ENCODE measurements at regions of chr10 and their contacts with region 1.

Region 1: GRCh38 chr10:90999512-91000172 is 78.8 kb upstream of the ANKRD1 start:
- DNase-seq: peak; percentile 54
- ATAC-seq: peak; percentile 69
- H3K4me3 ChIP-seq: no peak overlapping the region
- H3K27ac ChIP-seq: peak overlapping the region; percentile 87
- H3K4me1 ChIP-seq: peaks cover 33% of the 10 kb centered on the region
- H3K27me3 ChIP-seq: no peaks in the 10 kb centered on the region
- CTCF ChIP-seq: no peak
- EP300 ChIP-seq: peak; percentile 31 to 80; a peak in 2 of 4 replicates
- POLR2A ChIP-seq: no peak
- RAD21 ChIP-seq: no peak

Region 2: GRCh38 chr10:91017198-91017597 is 17.6 kb after region 1 on chr10:
- CTCF ChIA-PET with region 1: interaction called, 41 read pairs
- POLR2A ChIA-PET with region 1: no interaction called
- RAD21 ChIA-PET with region 1: interaction called, 3 read pairs
- SMC1A ChIA-PET with region 1: interaction called, 15 read pairs
- in situ Hi-C with region 1: no loop called
- intact Hi-C with region 1: no loop called
- DNase-seq: no peak
- ATAC-seq: peak; percentile 58
- H3K4me3 ChIP-seq: no peak overlapping the region
- H3K27ac ChIP-seq: no peak overlapping the region; the same call in 1 of the 2 replicates
- H3K4me1 ChIP-seq: no peaks in the 10 kb centered on the region
- H3K27me3 ChIP-seq: no peaks in the 10 kb centered on the region
- CTCF ChIP-seq: no peak
- EP300 ChIP-seq: no peak
- POLR2A ChIP-seq: no peak
- RAD21 ChIP-seq: no peak

Measured in GM12878 (cell line).